ENCODE measurements at regions of chr9 and their contacts with region 1.

Region 1: DNA sequence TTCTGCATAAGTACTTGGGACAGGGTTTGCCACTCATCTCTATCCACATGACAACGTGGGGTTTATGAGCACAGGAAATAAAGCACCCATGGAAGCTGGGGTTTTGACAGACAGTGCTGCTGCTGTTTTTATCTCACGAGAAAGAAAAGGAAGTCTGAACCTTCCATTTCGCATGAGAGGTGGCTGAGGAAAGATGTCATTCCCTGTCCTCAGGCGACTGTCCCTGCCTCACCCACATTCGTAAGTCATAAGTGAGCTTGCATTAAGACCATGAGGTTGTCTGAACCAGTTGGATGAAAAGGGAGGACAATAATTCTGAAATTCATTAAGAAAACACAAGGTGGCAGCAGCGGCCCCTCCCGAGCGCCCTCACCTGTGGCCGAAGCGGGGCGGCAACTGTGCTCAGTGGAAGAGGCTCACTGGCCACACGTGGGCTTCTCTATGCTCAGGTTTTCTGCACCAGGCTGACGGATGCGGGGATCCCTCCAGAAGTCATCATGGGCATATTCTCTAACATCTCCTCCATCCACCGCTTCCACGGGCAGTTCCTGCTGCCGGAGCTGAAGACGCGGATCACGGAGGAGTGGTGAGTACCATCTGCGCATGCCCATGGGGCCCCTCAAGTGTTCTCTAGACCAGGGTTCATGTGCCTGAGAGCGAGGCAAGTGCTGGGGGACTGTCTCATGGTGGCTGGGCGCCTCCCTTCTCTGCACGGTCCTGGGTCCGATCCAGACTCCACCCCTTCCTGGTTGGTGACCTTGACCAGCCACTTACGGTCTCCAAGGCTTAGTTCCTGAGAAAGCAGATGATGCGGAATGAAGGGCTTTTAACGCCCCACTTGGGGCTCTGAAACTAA is 54.7 kb upstream of the SUSD3 start:
- DNase-seq: peak; percentile 58 to 72
- H3K4me3 ChIP-seq: no peak overlapping the region
- H3K27ac ChIP-seq: peak overlapping the region; percentile 62
- H3K4me1 ChIP-seq: peaks cover 13% of the 10 kb centered on the region
- H3K27me3 ChIP-seq: no peaks in the 10 kb centered on the region
- CTCF ChIP-seq: peak; percentile 79

Region 2: GRCh38 chr9:92877531-92878430 is 126.0 kb before region 1 on chr9 and contains the start of gene ZNF484:
- CTCF ChIA-PET with region 1: no interaction called
- POLR2A ChIA-PET with region 1: no interaction called
- intact Hi-C with region 1: no loop called
- DNase-seq: peak; percentile 94 to 99
- H3K4me3 ChIP-seq: peak within 1 kb of the TSS; percentile 68
- H3K27ac ChIP-seq: peak within 1 kb of the TSS; percentile 72
- H3K4me1 ChIP-seq: peaks cover 28% of the 10 kb centered on the region
- H3K27me3 ChIP-seq: no peaks in the 10 kb centered on the region
- CTCF ChIP-seq: no peak
- total RNA-seq, gene ZNF484: 8.4 and 10.8 TPM in 2 replicates

Region 3: GRCh38 chr9:92970467-92970923 is 33.3 kb before region 1 on chr9:
- CTCF ChIA-PET with region 1: interaction called, 11 read pairs
- POLR2A ChIA-PET with region 1: interaction called, 7 read pairs
- intact Hi-C with region 1: loop called (anchors 1 kb)
- DNase-seq: peak; percentile 76 to 85
- H3K4me3 ChIP-seq: no peak overlapping the region
- H3K27ac ChIP-seq: peak overlapping the region; percentile 30; the same call in 1 of the 2 replicates
- H3K4me1 ChIP-seq: peaks cover 54% of the 10 kb centered on the region
- H3K27me3 ChIP-seq: no peaks in the 10 kb centered on the region
- CTCF ChIP-seq: no peak